SK-N-SH (cell line): ENCODE measurements at regions of chr7 and their contacts with region 1.

Region 1: GRCh38 chr7:154549316-154549715 is 453.6 kb downstream of the PAXIP1 start:
- DNase-seq: no peak
- H3K4me3 ChIP-seq: no peak overlapping the region
- H3K27ac ChIP-seq: no peak overlapping the region
- H3K4me1 ChIP-seq: peaks cover 0 to 22% of the 10 kb centered on the region in 2 experiments; a peak in 2 of 4 replicates
- H3K27me3 ChIP-seq: no peaks in the 10 kb centered on the region
- CTCF ChIP-seq: no peak
- EP300 ChIP-seq: no peak
- RAD21 ChIP-seq: no peak

Region 2: DNA sequence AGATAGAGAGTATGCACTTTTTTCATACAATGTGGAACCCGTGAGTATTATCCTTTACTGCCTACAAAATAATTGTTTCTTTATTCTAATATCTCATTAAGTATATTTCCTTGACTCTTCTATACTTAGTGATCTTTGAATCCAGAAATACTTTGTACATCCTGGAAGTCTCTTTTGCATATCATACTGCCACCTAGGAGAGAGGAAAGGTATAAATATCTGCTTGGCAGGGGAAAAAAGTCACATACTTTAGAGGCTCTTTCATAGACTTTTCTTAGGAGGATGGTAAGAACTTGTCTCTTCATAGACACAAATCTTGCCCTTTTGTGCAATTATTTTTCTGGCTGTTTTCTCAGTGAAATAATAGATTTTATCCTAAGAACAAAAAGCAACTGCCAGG is 17.6 kb after region 1 on chr7:
- CTCF ChIA-PET with region 1: interaction called, 17 read pairs
- POLR2A ChIA-PET with region 1: interaction called, 3 read pairs
- DNase-seq: no peak
- H3K4me3 ChIP-seq: no peak overlapping the region
- H3K27ac ChIP-seq: no peak overlapping the region
- H3K4me1 ChIP-seq: 0 out of 4 replicates have a peak, but pooled peaks cover 0 to 3% of the 10 kb centered on the region in 2 experiments
- H3K27me3 ChIP-seq: no peaks in the 10 kb centered on the region
- CTCF ChIP-seq: no peak
- EP300 ChIP-seq: no peak
- RAD21 ChIP-seq: peak; percentile 69